ENCODE measurements at regions of chr12 and their contacts with region 1.

Region 1: GRCh38 chr12:111396726-111397445 is 8.8 kb upstream of the SH2B3 start:
- DNase-seq: peak; percentile 95
- H3K4me3 ChIP-seq: no peak overlapping the region
- H3K27ac ChIP-seq: peak overlapping the region; percentile 80
- H3K4me1 ChIP-seq: peaks cover 31% of the 10 kb centered on the region
- H3K27me3 ChIP-seq: no peaks in the 10 kb centered on the region
- CTCF ChIP-seq: peak; percentile 99

Region 2: GRCh38 chr12:111074559-111074958 is 322.3 kb before region 1 on chr12:
- CTCF ChIA-PET with region 1: no interaction called
- POLR2A ChIA-PET with region 1: no interaction called
- intact Hi-C with region 1: no loop called
- DNase-seq: no peak
- H3K4me3 ChIP-seq: no peak overlapping the region
- H3K27ac ChIP-seq: no peak overlapping the region
- H3K4me1 ChIP-seq: no peaks in the 10 kb centered on the region
- H3K27me3 ChIP-seq: no peaks in the 10 kb centered on the region
- CTCF ChIP-seq: no peak

Region 3: GRCh38 chr12:111330800-111331752 is 65.8 kb before region 1 on chr12:
- CTCF ChIA-PET with region 1: interaction called, 10 read pairs
- POLR2A ChIA-PET with region 1: no interaction called
- intact Hi-C with region 1: no loop called
- DNase-seq: peak; percentile 83
- H3K4me3 ChIP-seq: no peak overlapping the region
- H3K27ac ChIP-seq: no peak overlapping the region
- H3K4me1 ChIP-seq: no peaks in the 10 kb centered on the region
- H3K27me3 ChIP-seq: no peaks in the 10 kb centered on the region
- CTCF ChIP-seq: peak; percentile 62

Region 4: GRCh38 chr12:111412007-111412829 is 15.3 kb after region 1 on chr12:
- CTCF ChIA-PET with region 1: interaction called, 10 read pairs
- POLR2A ChIA-PET with region 1: interaction called, 7 read pairs
- intact Hi-C with region 1: no loop called
- DNase-seq: peak; percentile 96
- H3K4me3 ChIP-seq: peak overlapping the region; percentile 15
- H3K27ac ChIP-seq: peak overlapping the region; percentile 91
- H3K4me1 ChIP-seq: peaks cover 68% of the 10 kb centered on the region
- H3K27me3 ChIP-seq: no peaks in the 10 kb centered on the region
- CTCF ChIP-seq: no peak

Region 5: GRCh38 chr12:111451649-111452129 is 54.8 kb after region 1 on chr12:
- CTCF ChIA-PET with region 1: interaction called, 37 read pairs
- POLR2A ChIA-PET with region 1: no interaction called
- intact Hi-C with region 1: loop called (anchors 1 kb)
- DNase-seq: peak; percentile 82
- H3K4me3 ChIP-seq: no peak overlapping the region
- H3K27ac ChIP-seq: no peak overlapping the region
- H3K4me1 ChIP-seq: peaks cover 47% of the 10 kb centered on the region
- H3K27me3 ChIP-seq: no peaks in the 10 kb centered on the region
- CTCF ChIP-seq: peak; percentile 89

Region 6: DNA sequence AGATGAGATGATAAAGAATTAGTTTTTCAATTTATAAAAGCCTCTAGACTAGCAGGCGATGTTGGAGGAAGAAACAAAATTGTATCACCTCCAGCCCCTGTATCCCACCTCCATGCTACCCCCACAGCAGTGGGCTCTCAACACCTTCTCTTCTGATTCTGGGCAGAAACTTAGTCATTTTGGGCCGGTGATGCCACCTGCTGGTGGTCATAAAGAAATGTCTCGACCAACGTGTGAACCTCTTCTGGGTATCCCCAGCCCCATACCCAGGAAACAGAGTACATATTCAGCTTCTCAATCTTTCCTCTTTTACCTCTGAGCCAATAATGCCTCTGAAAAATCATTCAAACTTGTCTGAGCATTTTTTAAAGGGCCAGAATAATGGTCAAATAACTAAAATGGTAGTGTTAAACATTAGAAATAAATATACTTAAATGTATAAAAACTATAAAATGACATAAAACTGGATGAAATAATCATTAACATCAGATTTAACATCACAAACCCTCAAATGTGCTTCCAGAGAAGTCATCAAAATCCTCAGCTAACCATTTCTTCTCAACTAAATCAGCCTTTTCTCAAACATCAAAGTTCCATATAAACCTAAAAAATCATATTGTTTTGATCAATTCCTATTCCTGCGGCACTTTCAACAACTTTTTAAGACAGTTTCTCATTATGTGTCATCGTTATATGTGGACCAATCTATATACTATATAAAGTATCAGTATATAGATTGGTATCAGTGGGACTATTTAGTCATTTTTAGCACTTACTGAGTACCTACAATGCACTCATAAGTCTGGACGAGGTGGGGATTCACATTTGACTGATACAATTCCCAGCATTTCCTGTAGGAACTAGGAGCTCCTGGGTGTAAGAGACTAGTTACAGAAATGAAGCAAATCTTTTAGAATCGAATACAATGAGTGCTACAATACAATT is 132.8 kb after region 1 on chr12:
- CTCF ChIA-PET with region 1: interaction called, 4 read pairs
- POLR2A ChIA-PET with region 1: no interaction called
- intact Hi-C with region 1: loop called (anchors 2 kb)
- DNase-seq: peak; percentile 79
- H3K4me3 ChIP-seq: no peak overlapping the region
- H3K27ac ChIP-seq: no peak overlapping the region
- H3K4me1 ChIP-seq: peaks cover 4% of the 10 kb centered on the region
- H3K27me3 ChIP-seq: no peaks in the 10 kb centered on the region
- CTCF ChIP-seq: peak; percentile 81

Region 7: GRCh38 chr12:111673503-111673902 is 276.6 kb after region 1 on chr12:
- CTCF ChIA-PET with region 1: interaction called, 15 read pairs
- POLR2A ChIA-PET with region 1: no interaction called
- intact Hi-C with region 1: loop called (anchors 5 kb)
- DNase-seq: peak; percentile 24
- H3K4me3 ChIP-seq: no peak overlapping the region
- H3K27ac ChIP-seq: no peak overlapping the region
- H3K4me1 ChIP-seq: no peaks in the 10 kb centered on the region
- H3K27me3 ChIP-seq: no peaks in the 10 kb centered on the region
- CTCF ChIP-seq: peak; percentile 51; the same call in 1 of the 2 replicates

Region 8: DNA sequence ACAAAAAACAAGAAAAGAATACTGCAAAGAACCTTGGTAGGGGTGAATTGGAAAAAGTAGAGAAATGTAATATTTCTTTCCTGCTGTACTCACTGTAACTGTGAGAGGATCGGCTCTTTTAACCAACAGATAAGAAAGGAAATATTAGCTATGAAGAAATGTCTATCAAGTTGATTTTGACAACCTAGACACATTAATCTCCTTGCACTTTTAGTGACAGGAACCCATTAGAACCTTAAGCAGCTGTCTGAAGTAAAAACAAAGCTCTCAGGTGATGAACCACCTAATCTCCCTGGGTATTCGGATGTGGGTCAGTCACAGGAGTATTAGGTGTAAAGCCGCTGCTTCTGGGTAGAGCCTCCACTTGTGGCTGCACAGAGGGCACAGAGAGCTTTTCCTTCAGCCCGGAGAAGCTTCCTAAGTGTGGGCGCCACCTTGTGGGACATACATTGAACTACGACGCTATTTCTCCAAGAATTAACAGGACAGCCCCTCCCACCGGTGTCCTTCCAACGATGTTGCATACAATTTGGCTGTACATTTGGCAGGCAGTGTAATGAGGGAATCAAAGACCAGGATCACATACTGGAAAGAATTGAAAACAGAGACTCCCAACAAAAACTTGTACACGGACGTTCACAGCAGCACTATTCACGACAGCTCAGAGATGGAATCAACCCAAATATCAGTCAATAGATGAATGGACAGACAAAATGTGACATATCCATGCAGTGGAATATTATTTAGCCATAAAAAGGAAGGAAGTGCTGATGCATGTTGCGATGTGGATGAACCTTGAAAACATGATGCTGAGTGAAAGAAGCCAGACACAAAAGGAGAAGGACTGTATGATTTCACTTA is 416.2 kb after region 1 on chr12:
- CTCF ChIA-PET with region 1: interaction called, 5 read pairs
- POLR2A ChIA-PET with region 1: no interaction called
- intact Hi-C with region 1: loop called (anchors 2 kb)
- DNase-seq: peak; percentile 90
- H3K4me3 ChIP-seq: no peak overlapping the region
- H3K27ac ChIP-seq: no peak overlapping the region
- H3K4me1 ChIP-seq: no peaks in the 10 kb centered on the region
- H3K27me3 ChIP-seq: no peaks in the 10 kb centered on the region
- CTCF ChIP-seq: peak; percentile 86

Region 9: GRCh38 chr12:112738531-112738930 is 1341.6 kb after region 1 on chr12:
- CTCF ChIA-PET with region 1: no interaction called
- POLR2A ChIA-PET with region 1: no interaction called
- intact Hi-C with region 1: no loop called
- DNase-seq: no peak
- H3K4me3 ChIP-seq: no peak overlapping the region
- H3K27ac ChIP-seq: no peak overlapping the region
- H3K4me1 ChIP-seq: no peaks in the 10 kb centered on the region
- H3K27me3 ChIP-seq: no peaks in the 10 kb centered on the region
- CTCF ChIP-seq: no peak

Measured in A673 (cell line).